ENCODE measurements at regions of chr5 and their contacts with region 1.

Region 1: GRCh38 chr5:112551419-112552032 is 132.4 kb upstream of the EPB41L4A start:
- DNase-seq: peak; percentile 45
- H3K4me3 Mint-ChIP-seq: no peak overlapping the region
- H3K27ac Mint-ChIP-seq: no peak overlapping the region
- H3K4me1 Mint-ChIP-seq: no peaks in the 10 kb centered on the region
- H3K27me3 Mint-ChIP-seq: no peaks in the 10 kb centered on the region

Region 2: DNA sequence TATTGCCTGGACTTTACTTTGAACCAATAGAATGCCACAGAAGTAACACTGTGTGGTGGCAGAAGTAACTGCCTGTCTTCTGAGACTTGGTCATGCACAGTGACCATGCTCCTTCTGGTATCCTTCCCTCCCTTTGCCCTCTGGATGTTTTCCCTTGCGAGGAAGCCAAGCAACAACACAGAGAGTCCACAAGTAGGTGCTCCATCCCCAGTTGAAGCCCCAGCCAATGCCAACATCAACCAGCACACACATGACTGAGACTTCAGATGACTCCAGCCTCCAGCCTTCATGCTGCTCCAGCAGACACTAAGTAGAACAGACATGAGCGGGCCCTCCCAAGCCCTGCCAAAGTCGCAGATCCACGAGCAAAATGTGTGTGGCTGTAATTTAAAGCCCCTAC is 262.1 kb before region 1 on chr5:
- CTCF ChIA-PET with region 1: no interaction called
- intact Hi-C with region 1: no loop called
- DNase-seq: no peak
- H3K4me3 Mint-ChIP-seq: no peak overlapping the region
- H3K27ac Mint-ChIP-seq: no peak overlapping the region
- H3K4me1 Mint-ChIP-seq: no peaks in the 10 kb centered on the region
- H3K27me3 Mint-ChIP-seq: no peaks in the 10 kb centered on the region

Region 3: DNA sequence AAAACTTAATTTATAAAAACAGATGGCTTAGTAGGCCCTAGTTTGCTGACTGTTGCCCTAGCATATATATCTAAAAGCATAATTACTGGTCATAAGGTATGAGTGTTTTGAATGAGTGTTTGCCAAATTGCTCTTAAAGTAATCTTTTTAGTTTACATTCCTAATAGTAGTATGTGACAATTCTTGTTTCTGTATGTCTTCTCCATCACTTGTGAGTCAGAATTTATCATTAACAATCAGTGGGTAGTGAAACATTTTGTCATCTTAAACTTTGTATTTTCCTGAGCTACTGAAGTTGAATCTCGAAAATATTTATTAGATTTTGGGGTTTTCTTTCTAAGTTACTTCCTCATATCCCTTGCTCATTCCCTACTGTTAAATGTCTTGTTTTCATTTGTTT is 235.7 kb after region 1 on chr5:
- CTCF ChIA-PET with region 1: no interaction called
- intact Hi-C with region 1: no loop called
- DNase-seq: no peak
- H3K4me3 Mint-ChIP-seq: no peak overlapping the region
- H3K27ac Mint-ChIP-seq: no peak overlapping the region
- H3K4me1 Mint-ChIP-seq: no peaks in the 10 kb centered on the region
- H3K27me3 Mint-ChIP-seq: no peaks in the 10 kb centered on the region

Region 4: GRCh38 chr5:112848116-112848811 is 296.7 kb after region 1 on chr5:
- CTCF ChIA-PET with region 1: interaction called, 6 read pairs
- intact Hi-C with region 1: loop called (anchors 1 kb)
- DNase-seq: no peak
- H3K4me3 Mint-ChIP-seq: no peak overlapping the region
- H3K27ac Mint-ChIP-seq: no peak overlapping the region
- H3K4me1 Mint-ChIP-seq: peaks cover 3% of the 10 kb centered on the region
- H3K27me3 Mint-ChIP-seq: peaks cover 3% of the 10 kb centered on the region